PC-9 (cell line): ENCODE measurements at regions of chr1 and their contacts with region 1.

Region 1: GRCh38 chr1:117166076-117166475 is 44.5 kb upstream of the TRIM45 start:
- DNase-seq: peak in 1 of 2 experiments; percentile 94
- H3K4me3 ChIP-seq: no peak overlapping the region
- H3K27ac ChIP-seq: 0 out of 2 replicates have a peak overlapping the region, but pooled peaks have one; percentile 13
- H3K4me1 ChIP-seq: peaks cover 11% of the 10 kb centered on the region
- H3K27me3 ChIP-seq: no peaks in the 10 kb centered on the region
- CTCF ChIP-seq: no peak

Region 2: DNA sequence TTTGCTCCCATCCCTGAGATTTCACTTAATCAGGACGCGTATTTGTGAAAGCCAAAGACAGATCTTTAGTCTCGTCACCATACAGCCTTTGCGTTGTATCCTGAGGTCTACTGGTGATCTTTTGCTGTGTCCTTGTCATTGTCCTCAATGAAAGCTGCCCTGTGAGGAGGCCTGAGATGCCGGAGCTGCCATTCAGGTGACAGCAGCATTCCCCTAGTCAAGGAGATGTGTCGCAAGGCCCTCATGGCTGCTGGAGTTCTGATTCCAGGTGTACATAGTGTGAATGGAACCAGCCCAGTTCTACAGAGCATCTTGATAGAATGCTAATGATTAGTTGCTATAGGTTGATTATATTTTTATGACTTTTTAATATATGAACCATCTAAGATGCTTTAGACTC is 81.8 kb before region 1 on chr1:
- CTCF ChIA-PET with region 1: no interaction called
- POLR2A ChIA-PET with region 1: no interaction called
- intact Hi-C with region 1: no loop called
- DNase-seq: no peak
- H3K4me3 ChIP-seq: no peak overlapping the region
- H3K27ac ChIP-seq: no peak overlapping the region
- H3K4me1 ChIP-seq: no peaks in the 10 kb centered on the region
- H3K27me3 ChIP-seq: no peaks in the 10 kb centered on the region
- CTCF ChIP-seq: no peak

Region 3: GRCh38 chr1:117367047-117368018 is 201.3 kb after region 1 on chr1 and contains the start of gene MAN1A2:
- CTCF ChIA-PET with region 1: no interaction called
- POLR2A ChIA-PET with region 1: interaction called, 10 read pairs
- intact Hi-C with region 1: no loop called
- DNase-seq: peak; percentile 85 to 96
- H3K4me3 ChIP-seq: peak within 1 kb of the TSS; percentile 66
- H3K27ac ChIP-seq: peak within 1 kb of the TSS; percentile 77
- H3K4me1 ChIP-seq: peaks cover 61% of the 10 kb centered on the region
- H3K27me3 ChIP-seq: no peaks in the 10 kb centered on the region
- CTCF ChIP-seq: no peak
- total RNA-seq, gene MAN1A2: 39.8 and 50.3 TPM in 2 replicates